Activated CD4-positive, alpha-beta T cell treated with anti-CD3 and anti-CD28 coated beads for 36 hours (primary cell): ENCODE measurements at regions of chr11 and their contacts with region 1.

Region 1: GRCh38 chr11:61891331-61892084 is at the start of gene FADS3:
- DNase-seq: peak; percentile 68
- ATAC-seq: peak; percentile 74
- H3K4me3 Mint-ChIP-seq: peak within 1 kb of the TSS; percentile 76
- H3K27ac Mint-ChIP-seq: peak within 1 kb of the TSS; percentile 58
- H3K4me1 Mint-ChIP-seq: peaks cover 2% of the 10 kb centered on the region
- H3K27me3 Mint-ChIP-seq: no peaks in the 10 kb centered on the region
- total RNA-seq, gene FADS3: 7.2 to 10.1 TPM

Region 2: DNA sequence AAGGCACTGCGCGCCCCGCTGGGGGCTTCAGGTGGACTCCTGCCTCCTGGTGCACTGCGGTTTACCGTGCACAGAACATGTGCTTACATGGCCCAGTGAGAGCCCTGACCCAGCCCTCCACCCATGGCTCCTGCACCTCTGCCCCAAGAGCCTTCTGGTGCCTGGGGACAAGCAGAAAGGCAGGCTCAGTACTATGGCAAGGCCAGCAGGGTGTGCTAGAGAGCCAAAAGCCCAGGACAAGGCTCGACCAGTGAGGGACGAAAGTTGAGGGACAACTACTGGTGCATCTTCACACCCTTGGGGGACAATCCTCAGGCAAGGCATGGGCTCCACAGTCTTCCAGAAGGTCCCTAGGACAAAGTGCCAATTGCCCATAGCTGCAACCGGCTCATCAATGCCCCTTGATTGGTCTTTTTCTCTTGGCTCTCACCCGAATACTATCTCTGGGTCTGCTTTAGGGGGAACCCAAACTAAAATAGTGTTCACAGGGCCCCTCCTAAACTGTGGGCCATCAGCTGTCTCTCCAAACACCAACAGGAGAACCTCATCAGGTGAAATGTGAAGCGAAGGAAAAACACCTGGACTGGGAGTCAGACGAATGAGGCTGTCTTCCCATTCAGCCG is 637.0 kb before region 1 on chr11:
- CTCF ChIA-PET with region 1: no interaction called
- POLR2A ChIA-PET with region 1: no interaction called
- intact Hi-C with region 1: no loop called
- DNase-seq: peak; percentile 84
- ATAC-seq: peak; percentile 97
- H3K4me3 Mint-ChIP-seq: no peak overlapping the region
- H3K27ac Mint-ChIP-seq: no peak overlapping the region
- H3K4me1 Mint-ChIP-seq: no peaks in the 10 kb centered on the region
- H3K27me3 Mint-ChIP-seq: no peaks in the 10 kb centered on the region

Region 3: GRCh38 chr11:61725781-61726231 is 165.7 kb before region 1 on chr11:
- CTCF ChIA-PET with region 1: no interaction called
- POLR2A ChIA-PET with region 1: no interaction called
- intact Hi-C with region 1: no loop called
- DNase-seq: no peak
- ATAC-seq: no peak
- H3K4me3 Mint-ChIP-seq: no peak overlapping the region
- H3K27ac Mint-ChIP-seq: no peak overlapping the region
- H3K4me1 Mint-ChIP-seq: no peaks in the 10 kb centered on the region
- H3K27me3 Mint-ChIP-seq: no peaks in the 10 kb centered on the region

Region 4: GRCh38 chr11:61752117-61752924 is 139.2 kb before region 1 on chr11 and contains the start of gene MYRF:
- CTCF ChIA-PET with region 1: no interaction called
- POLR2A ChIA-PET with region 1: no interaction called
- intact Hi-C with region 1: no loop called
- DNase-seq: peak; percentile 76
- ATAC-seq: peak; percentile 87
- H3K4me3 Mint-ChIP-seq: peak within 1 kb of the TSS; percentile 55
- H3K27ac Mint-ChIP-seq: no peak within 1 kb of the TSS
- H3K4me1 Mint-ChIP-seq: peaks cover 9% of the 10 kb centered on the region
- H3K27me3 Mint-ChIP-seq: peaks cover 28% of the 10 kb centered on the region
- total RNA-seq, gene MYRF: 0.25 to 0.57 TPM

Region 5: GRCh38 chr11:61776551-61777075 is 114.9 kb before region 1 on chr11:
- CTCF ChIA-PET with region 1: no interaction called
- POLR2A ChIA-PET with region 1: no interaction called
- intact Hi-C with region 1: no loop called
- DNase-seq: peak; percentile 86
- ATAC-seq: peak; percentile 80
- H3K4me3 Mint-ChIP-seq: peak overlapping the region; percentile 23
- H3K27ac Mint-ChIP-seq: no peak overlapping the region
- H3K4me1 Mint-ChIP-seq: peaks cover 11% of the 10 kb centered on the region
- H3K27me3 Mint-ChIP-seq: peaks cover 5% of the 10 kb centered on the region

Region 6: GRCh38 chr11:61816736-61817455 is 74.6 kb before region 1 on chr11 and contains the start of gene FADS1:
- CTCF ChIA-PET with region 1: no interaction called
- POLR2A ChIA-PET with region 1: no interaction called
- intact Hi-C with region 1: loop called in 1 of 2 experiments (anchors 2 kb)
- DNase-seq: peak; percentile 92
- ATAC-seq: peak; percentile 67
- H3K4me3 Mint-ChIP-seq: peak within 1 kb of the TSS; percentile 89
- H3K27ac Mint-ChIP-seq: peak within 1 kb of the TSS; percentile 80
- H3K4me1 Mint-ChIP-seq: peaks cover 7% of the 10 kb centered on the region
- H3K27me3 Mint-ChIP-seq: peaks cover 25% of the 10 kb centered on the region
- total RNA-seq, gene FADS1: 18.9 to 23.7 TPM

Region 7: DNA sequence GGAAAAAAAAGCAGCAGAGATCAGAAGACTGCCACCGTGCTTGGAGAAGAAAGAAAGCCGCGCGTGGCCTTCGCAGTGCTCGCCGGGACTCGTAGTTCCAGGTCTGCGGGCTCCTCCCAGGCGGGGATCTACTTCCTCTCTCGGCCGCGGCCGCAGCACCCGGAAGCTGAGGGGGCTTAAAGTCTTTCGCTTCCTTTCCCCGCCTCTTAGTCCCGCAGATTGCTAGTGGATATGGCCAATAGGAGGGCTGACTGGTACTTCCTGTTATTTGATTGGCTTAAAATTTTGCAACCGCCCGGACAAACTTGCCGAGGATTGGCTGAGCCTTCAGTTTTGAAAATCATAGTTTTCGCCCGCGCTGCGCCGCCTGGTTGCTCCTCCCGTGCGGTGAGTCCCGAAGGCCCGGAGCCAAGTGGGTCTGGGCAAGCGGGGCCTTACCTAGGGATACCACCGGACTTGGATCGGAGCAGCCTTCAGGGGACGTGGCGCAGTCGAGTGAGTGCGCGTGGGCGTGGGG is 232.2 kb after region 1 on chr11 and contains the start of gene INCENP:
- CTCF ChIA-PET with region 1: no interaction called
- POLR2A ChIA-PET with region 1: no interaction called
- intact Hi-C with region 1: loop called in 1 of 2 experiments (anchors 5 kb)
- DNase-seq: peak; percentile 97
- ATAC-seq: peak; percentile 98
- H3K4me3 Mint-ChIP-seq: peak within 1 kb of the TSS; percentile 98
- H3K27ac Mint-ChIP-seq: peak within 1 kb of the TSS; percentile 90
- H3K4me1 Mint-ChIP-seq: peaks cover 29% of the 10 kb centered on the region
- H3K27me3 Mint-ChIP-seq: no peaks in the 10 kb centered on the region
- total RNA-seq, gene INCENP: 125 to 140 TPM